CD8-positive, alpha-beta T cell (primary cell): ENCODE measurements at regions of chr2 and their contacts with region 1.

Region 1: GRCh38 chr2:64675860-64676259 is 22.1 kb upstream of the SERTAD2 start:
- DNase-seq: peak in 3 of 9 experiments; percentile 22 to 59 (median 42)
- ATAC-seq: peak; percentile 92
- H3K4me3 ChIP-seq: no peak overlapping the region
- H3K4me3 Mint-ChIP-seq: no peak overlapping the region
- H3K27ac ChIP-seq: no peak overlapping the region
- H3K27ac Mint-ChIP-seq: peak overlapping the region; percentile 37
- H3K4me1 ChIP-seq: peaks cover 25% of the 10 kb centered on the region
- H3K4me1 Mint-ChIP-seq: peaks cover 56% of the 10 kb centered on the region
- H3K27me3 ChIP-seq: no peaks in the 10 kb centered on the region
- H3K27me3 Mint-ChIP-seq: no peaks in the 10 kb centered on the region
- CTCF ChIP-seq: no peak

Region 2: DNA sequence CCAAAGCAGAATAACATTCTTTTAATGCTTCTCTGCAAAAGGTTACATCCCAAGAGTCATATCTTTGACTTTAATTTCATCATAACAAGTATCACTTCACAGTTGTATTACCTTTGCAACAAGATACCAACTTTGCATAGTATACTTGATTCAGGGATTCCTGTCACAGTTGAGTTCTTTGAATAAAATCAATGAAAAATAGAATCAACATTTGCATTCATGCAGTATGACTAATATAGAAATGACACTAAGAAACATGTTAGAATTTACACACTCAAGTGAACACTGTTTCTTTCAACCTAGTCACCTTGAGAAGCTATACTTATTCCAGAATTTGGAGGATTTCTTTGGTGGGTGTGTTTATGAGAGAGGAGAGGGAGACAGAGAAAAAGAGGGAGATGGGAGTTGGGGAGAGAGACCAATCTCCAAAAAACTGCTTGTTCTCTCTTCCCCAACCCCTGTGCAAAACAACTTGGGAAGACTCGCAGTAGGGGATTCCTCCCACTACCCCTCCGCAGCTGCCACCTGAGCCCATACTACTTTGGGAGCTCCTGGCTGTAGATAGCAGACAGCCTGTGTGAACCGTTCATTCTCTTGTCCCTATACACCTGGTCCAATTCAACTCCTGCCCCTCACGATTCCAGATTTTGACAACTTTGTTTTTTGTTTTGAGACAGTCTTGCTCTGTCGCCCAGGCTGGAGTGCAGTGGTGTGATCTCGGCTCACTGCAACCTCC is 589.3 kb before region 1 on chr2:
- CTCF ChIA-PET with region 1: no interaction called
- POLR2A ChIA-PET with region 1: no interaction called
- intact Hi-C with region 1: no loop called
- DNase-seq: no peak
- ATAC-seq: no peak
- H3K4me3 ChIP-seq: no peak overlapping the region
- H3K4me3 Mint-ChIP-seq: no peak overlapping the region
- H3K27ac ChIP-seq: no peak overlapping the region
- H3K27ac Mint-ChIP-seq: no peak overlapping the region
- H3K4me1 ChIP-seq: no peaks in the 10 kb centered on the region
- H3K4me1 Mint-ChIP-seq: peaks cover 6% of the 10 kb centered on the region
- H3K27me3 ChIP-seq: no peaks in the 10 kb centered on the region
- H3K27me3 Mint-ChIP-seq: no peaks in the 10 kb centered on the region
- CTCF ChIP-seq: no peak

Region 3: DNA sequence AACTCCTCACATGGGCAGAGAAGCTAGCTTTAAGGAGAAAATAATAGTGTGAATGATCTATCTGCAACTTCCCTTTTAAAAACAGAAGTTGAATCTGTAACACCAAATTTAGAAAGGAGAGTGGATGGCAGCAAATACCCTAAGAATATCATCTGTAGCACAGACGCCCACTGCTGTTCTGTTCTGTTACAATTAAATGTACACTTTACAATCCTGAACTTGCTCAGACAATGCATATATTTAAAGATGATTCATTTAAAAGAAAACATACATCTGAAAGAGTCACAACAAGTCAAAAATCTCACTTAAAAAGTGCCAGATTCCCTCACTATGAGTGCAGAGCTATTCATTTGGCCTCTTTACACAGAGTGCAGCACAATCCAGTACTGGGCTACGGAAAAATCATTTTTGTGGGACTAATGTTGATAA is 14.1 kb before region 1 on chr2:
- CTCF ChIA-PET with region 1: no interaction called
- POLR2A ChIA-PET with region 1: interaction called, 14 read pairs
- intact Hi-C with region 1: loop called in 1 of 2 experiments (anchors 1 kb)
- DNase-seq: no peak
- ATAC-seq: no peak
- H3K4me3 ChIP-seq: no peak overlapping the region
- H3K4me3 Mint-ChIP-seq: no peak overlapping the region
- H3K27ac ChIP-seq: no peak overlapping the region
- H3K27ac Mint-ChIP-seq: peak overlapping the region; percentile 20
- H3K4me1 ChIP-seq: peaks cover 43% of the 10 kb centered on the region
- H3K4me1 Mint-ChIP-seq: peaks cover 69% of the 10 kb centered on the region
- H3K27me3 ChIP-seq: no peaks in the 10 kb centered on the region
- H3K27me3 Mint-ChIP-seq: no peaks in the 10 kb centered on the region
- CTCF ChIP-seq: no peak

Region 4: DNA sequence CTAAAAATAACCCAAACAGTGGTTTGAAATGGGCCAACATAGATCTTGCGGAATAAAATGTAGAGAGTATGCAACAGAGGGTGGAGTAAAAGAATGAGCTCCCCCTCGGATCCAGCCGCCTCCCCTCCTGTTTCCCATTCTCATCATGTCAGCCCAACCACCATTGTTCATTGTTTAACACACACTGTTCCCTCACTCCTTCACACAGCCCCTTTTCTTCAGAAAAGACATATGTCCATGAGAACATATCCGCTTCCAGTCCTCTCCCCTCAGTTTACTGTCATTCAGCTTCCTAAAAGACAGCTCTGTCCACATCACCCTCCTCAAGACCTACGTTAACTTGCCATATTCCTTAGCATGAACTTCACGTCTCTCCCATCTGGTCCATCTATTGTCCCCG is 40.7 kb after region 1 on chr2:
- CTCF ChIA-PET with region 1: no interaction called
- POLR2A ChIA-PET with region 1: no interaction called
- intact Hi-C with region 1: loop called in 1 of 2 experiments (anchors 5 kb)
- DNase-seq: no peak
- ATAC-seq: no peak
- H3K4me3 ChIP-seq: no peak overlapping the region
- H3K4me3 Mint-ChIP-seq: no peak overlapping the region
- H3K27ac ChIP-seq: no peak overlapping the region
- H3K27ac Mint-ChIP-seq: no peak overlapping the region
- H3K4me1 ChIP-seq: peaks cover 8% of the 10 kb centered on the region
- H3K4me1 Mint-ChIP-seq: peaks cover 21% of the 10 kb centered on the region
- H3K27me3 ChIP-seq: no peaks in the 10 kb centered on the region
- H3K27me3 Mint-ChIP-seq: no peaks in the 10 kb centered on the region
- CTCF ChIP-seq: no peak